PC-3 (cell line): ENCODE measurements at regions of chr13 and their contacts with region 1.

Region 1: DNA sequence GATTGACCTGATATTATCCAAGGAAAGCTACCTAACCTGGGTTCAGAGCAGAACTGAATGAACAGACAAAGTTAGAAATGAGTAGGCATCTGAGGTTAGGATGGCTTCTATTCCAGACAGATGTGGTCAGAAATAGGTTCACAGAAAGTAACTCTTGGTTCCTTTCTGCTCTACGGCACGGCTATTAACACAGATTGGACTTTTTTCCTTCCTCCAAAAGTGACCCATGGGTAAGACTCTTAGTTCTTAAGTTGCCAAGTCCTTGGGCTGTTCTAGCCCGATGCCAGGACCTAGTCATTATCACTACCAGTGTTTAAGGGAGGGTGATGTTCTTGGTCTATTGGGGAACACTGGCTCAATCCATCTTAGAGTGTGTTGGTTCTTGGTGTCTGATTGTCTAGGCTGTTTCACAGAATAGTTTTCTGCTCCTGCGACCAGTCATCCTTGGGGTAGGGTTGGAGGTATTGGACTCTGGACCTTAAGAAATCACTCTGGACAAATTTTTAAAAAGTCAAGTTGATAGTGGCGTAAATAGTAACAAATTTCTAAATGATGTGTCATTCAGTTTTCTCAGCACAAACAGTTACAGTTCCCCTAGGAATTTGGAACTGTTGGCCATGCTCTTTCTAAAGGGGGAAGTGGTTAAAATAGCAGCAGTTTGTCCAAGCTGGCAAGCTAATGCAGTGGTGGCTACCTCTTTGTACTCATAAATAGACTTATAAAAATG is 60.1 kb upstream of the MYCBP2 start:
- DNase-seq: peak; percentile 76
- ATAC-seq: peak; percentile 96
- H3K4me3 ChIP-seq: no peak overlapping the region
- H3K27ac ChIP-seq: peak overlapping the region; percentile 28; the same call in 1 of the 2 replicates
- H3K4me1 ChIP-seq: peaks cover 14% of the 10 kb centered on the region; the same call in 1 of the 2 replicates
- H3K27me3 ChIP-seq: no peaks in the 10 kb centered on the region
- CTCF ChIP-seq: no peak

Region 2: GRCh38 chr13:76828316-76828741 is 558.7 kb before region 1 on chr13:
- CTCF ChIA-PET with region 1: no interaction called
- POLR2A ChIA-PET with region 1: no interaction called
- intact Hi-C with region 1: no loop called
- DNase-seq: no peak
- ATAC-seq: no peak
- H3K4me3 ChIP-seq: no peak overlapping the region
- H3K27ac ChIP-seq: no peak overlapping the region
- H3K4me1 ChIP-seq: peaks cover 4% of the 10 kb centered on the region; the same call in 1 of the 2 replicates
- H3K27me3 ChIP-seq: no peaks in the 10 kb centered on the region
- CTCF ChIP-seq: no peak

Region 3: DNA sequence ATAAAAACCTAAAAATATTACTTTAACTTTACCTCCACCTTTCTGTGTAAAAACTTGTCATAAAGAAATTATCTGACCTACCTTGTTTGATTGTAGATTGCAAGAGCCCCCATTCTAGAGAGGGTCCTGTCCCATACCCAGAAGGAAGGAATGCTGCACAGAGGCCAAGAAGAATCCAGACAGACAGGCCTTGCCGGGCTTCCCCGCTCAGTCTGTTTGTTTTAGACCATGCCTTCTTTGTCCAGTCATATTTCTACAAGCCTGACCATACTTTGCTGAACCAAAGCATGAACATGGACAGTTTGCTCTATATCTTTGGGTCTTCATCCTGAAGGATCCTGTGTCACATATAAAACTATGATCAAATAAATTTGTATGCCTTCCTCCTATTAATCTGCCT is 35.7 kb after region 1 on chr13:
- CTCF ChIA-PET with region 1: no interaction called
- POLR2A ChIA-PET with region 1: no interaction called
- intact Hi-C with region 1: loop called (anchors 5 kb)
- DNase-seq: peak; percentile 35
- ATAC-seq: no peak; the same call in 1 of the 2 replicates
- H3K4me3 ChIP-seq: no peak overlapping the region
- H3K27ac ChIP-seq: no peak overlapping the region
- H3K4me1 ChIP-seq: peaks cover 24% of the 10 kb centered on the region
- H3K27me3 ChIP-seq: no peaks in the 10 kb centered on the region
- CTCF ChIP-seq: no peak